ENCODE measurements at regions of chr6 and their contacts with region 1.

Region 1: DNA sequence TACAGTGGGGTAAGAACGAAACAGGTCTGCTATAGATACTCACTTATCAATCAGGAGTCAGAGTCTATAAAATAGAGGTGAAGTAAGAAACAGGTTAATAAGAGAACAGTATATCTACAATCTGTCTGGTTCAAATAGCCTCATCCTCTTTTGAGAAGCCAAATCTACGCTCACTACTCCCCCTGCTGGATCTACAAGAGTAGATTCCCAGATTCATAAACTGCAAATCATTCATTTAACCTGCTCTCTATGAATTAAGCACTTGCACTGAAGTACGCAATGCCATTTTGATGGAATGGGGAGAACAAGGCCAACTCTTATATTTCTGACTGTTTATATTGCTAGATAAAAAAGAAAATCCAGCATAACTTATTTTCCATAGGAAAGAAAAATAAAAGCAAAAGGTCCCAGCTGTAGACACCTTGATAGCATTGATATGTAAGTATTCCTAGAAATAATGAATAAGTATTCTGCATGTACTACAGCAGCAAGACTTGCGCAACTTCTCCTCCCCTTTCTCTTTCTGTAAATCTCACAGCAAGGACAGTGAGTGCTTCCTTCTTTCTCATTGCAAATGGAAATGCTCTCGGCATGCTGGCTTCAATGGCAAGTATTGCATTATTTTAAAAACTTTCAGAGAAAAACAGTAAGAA is 92.3 kb downstream of the RFX6 start:
- DNase-seq: peak; percentile 20 to 57 (median 36)
- ATAC-seq: peak; percentile 82
- H3K4me3 ChIP-seq: no peak overlapping the region
- H3K27ac ChIP-seq: no peak overlapping the region
- H3K4me1 ChIP-seq: no peaks in the 10 kb centered on the region
- H3K27me3 ChIP-seq: peaks cover 0 to 3% of the 10 kb centered on the region in 2 donors
- CTCF ChIP-seq: peak; percentile 31 to 73 (median 63)
- POLR2A ChIP-seq: no peak

Region 2: GRCh38 chr6:116779573-116780164 is 189.7 kb before region 1 on chr6:
- intact Hi-C with region 1: loop called (anchors 10 kb)
- DNase-seq: no peak
- ATAC-seq: peak; percentile 47
- H3K4me3 ChIP-seq: no peak overlapping the region
- H3K27ac ChIP-seq: no peak overlapping the region
- H3K4me1 ChIP-seq: no peaks in the 10 kb centered on the region
- H3K27me3 ChIP-seq: no peaks in the 10 kb centered on the region
- CTCF ChIP-seq: peak; percentile 28 to 56 (median 47)
- POLR2A ChIP-seq: no peak

Region 3: DNA sequence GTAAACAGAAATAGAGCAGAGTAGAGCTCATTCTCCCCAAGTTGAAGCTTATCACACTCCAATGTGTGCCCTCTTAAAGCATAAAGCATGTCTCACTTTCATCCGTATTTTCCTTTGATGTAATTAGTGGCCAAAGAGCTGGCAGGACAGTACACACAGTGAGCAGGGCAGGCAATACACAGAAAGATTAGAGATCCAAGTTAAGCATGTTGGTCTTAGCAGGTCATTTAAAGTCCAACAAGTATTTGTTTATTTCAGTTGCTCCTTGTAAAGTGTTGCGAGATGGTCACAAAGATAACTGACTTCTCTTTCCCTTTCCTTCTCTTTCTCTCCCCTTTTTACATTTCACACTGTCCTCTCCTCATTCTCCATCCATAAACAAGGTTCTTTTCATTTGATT is 45.1 kb before region 1 on chr6:
- intact Hi-C with region 1: no loop called
- DNase-seq: no peak
- ATAC-seq: no peak
- H3K4me3 ChIP-seq: no peak overlapping the region
- H3K27ac ChIP-seq: no peak overlapping the region
- H3K4me1 ChIP-seq: no peaks in the 10 kb centered on the region
- H3K27me3 ChIP-seq: no peaks in the 10 kb centered on the region
- CTCF ChIP-seq: no peak
- POLR2A ChIP-seq: no peak

Measured in body of pancreas (tissue), 4 donors.